ENCODE measurements at regions of chr1 and their contacts with region 1.

Region 1: DNA sequence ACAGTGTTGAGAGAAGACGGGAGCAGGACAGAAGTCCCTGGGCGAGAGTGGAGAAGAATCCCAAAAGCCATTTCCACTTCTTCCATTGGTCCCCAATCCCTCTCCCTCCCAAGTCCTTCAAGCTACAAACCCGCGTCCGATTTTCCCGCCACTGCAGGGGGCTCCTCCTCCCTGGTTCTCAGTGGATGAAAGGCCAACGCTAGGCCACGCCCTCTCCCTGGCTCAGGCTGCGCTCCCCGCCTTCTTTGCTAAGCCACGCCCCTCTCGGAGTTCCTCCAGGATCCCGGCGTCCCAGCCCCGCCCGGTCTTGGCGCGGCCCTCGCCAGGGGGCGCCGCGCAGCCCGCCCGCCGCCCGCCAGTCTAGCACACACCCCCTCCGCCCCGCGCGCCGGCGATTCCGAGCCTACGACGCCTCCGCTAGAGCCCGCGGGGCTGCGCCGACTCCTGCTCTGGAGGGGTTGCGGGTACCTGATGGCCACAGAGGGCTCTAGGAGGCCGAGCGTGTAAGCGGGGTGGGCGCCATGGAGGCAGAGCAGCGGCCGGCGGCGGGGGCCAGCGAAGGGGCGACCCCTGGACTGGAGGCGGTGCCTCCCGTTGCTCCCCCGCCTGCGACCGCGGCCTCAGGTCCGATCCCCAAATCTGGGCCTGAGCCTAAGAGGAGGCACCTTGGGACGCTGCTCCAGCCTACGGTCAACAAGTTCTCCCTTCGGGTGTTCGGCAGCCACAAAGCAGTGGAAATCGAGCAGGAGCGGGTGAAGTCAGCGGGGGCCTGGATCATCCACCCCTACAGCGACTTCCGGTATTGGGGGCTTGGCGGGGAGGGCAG is at the start of gene HCN3:
- DNase-seq: peak; percentile 93
- H3K4me3 Mint-ChIP-seq: peak within 1 kb of the TSS; percentile 71
- H3K27ac Mint-ChIP-seq: peak within 1 kb of the TSS; percentile 59
- H3K4me1 Mint-ChIP-seq: peaks cover 38% of the 10 kb centered on the region
- H3K27me3 Mint-ChIP-seq: peaks cover 4% of the 10 kb centered on the region
- total RNA-seq, gene HCN3: 2.5 to 3.4 TPM

Region 2: DNA sequence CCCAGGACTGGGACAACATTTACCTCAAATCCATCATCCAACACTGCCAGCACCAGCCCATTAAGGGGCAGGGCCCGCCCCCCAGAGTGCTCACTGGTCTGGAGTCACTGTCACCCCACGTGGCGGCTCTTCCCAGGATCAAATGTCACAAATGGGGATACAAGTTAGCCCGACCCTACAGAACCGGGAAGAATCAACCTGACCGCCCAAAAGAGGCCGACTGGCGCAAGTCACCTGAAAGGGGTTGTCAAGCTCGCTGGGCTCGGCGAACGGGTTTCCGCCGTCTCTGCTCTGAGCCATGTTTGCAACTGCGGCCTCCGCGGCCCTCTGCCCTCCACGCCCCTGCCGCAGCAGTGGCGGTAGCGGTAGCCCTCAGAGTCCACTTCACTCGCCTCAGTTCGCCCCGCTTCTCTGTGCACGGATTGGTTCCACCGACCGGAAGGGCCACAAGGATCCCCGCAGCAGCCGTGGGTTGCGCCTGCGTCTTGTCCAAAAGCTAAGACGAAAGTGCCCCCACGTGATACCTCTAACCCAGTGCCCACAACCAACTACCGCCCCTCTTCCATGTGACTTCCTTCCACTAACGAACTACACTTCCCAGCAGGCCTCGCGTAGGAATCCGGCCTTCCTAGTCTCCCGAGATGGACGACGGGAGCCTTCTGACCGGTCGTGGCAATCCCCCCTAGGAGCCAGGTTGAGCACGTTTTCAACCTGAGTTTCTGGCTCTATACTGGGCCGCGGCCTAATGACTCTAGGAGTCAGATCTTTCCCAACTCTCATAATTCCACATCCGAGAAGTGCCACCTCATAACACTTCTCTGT is 15.2 kb before region 1 on chr1 and contains the start of gene SCAMP3:
- CTCF ChIA-PET with region 1: interaction called, 10 read pairs
- POLR2A ChIA-PET with region 1: interaction called, 3 read pairs
- DNase-seq: peak; percentile 94
- H3K4me3 Mint-ChIP-seq: peak within 1 kb of the TSS; percentile 94
- H3K27ac Mint-ChIP-seq: peak within 1 kb of the TSS; percentile 94
- H3K4me1 Mint-ChIP-seq: peaks cover 37% of the 10 kb centered on the region
- H3K27me3 Mint-ChIP-seq: no peaks in the 10 kb centered on the region
- total RNA-seq, gene SCAMP3: 88.7 to 96.4 TPM

Region 3: GRCh38 chr1:155396874-155397476 is 119.7 kb after region 1 on chr1:
- CTCF ChIA-PET with region 1: no interaction called
- POLR2A ChIA-PET with region 1: no interaction called
- DNase-seq: no peak
- H3K4me3 Mint-ChIP-seq: no peak overlapping the region
- H3K27ac Mint-ChIP-seq: no peak overlapping the region
- H3K4me1 Mint-ChIP-seq: no peaks in the 10 kb centered on the region
- H3K27me3 Mint-ChIP-seq: no peaks in the 10 kb centered on the region

Region 4: GRCh38 chr1:155527677-155528076 is 250.4 kb after region 1 on chr1:
- CTCF ChIA-PET with region 1: no interaction called
- POLR2A ChIA-PET with region 1: no interaction called
- DNase-seq: no peak
- H3K4me3 Mint-ChIP-seq: no peak overlapping the region
- H3K27ac Mint-ChIP-seq: no peak overlapping the region
- H3K4me1 Mint-ChIP-seq: peaks cover 20% of the 10 kb centered on the region
- H3K27me3 Mint-ChIP-seq: no peaks in the 10 kb centered on the region

Measured in activated CD4-positive, alpha-beta T cell treated with anti-CD3 and anti-CD28 coated beads, Interleukin-2, amount 10 ng/mL, durations not matched to agents 7 days and 5 days (primary cell).